PC-9 (cell line): ENCODE measurements at regions of chr1 and their contacts with region 1.

Region 1: GRCh38 chr1:245156081-245156735 is 1.4 kb downstream of the KIF26B start:
- DNase-seq: peak; percentile 67 to 95
- H3K4me3 ChIP-seq: peak overlapping the region; percentile 47; the same call in 1 of the 2 replicates
- H3K27ac ChIP-seq: no peak overlapping the region
- H3K4me1 ChIP-seq: peaks cover 23% of the 10 kb centered on the region
- H3K27me3 ChIP-seq: peaks cover 96% of the 10 kb centered on the region
- CTCF ChIP-seq: peak; percentile 75

Region 2: GRCh38 chr1:244864253-244865027 is 291.8 kb before region 1 on chr1 and contains the start of gene HNRNPU:
- CTCF ChIA-PET with region 1: no interaction called
- POLR2A ChIA-PET with region 1: no interaction called
- intact Hi-C with region 1: loop called (anchors 10 kb)
- DNase-seq: peak; percentile 84 to 97
- H3K4me3 ChIP-seq: peak within 1 kb of the TSS; percentile 98
- H3K27ac ChIP-seq: peak within 1 kb of the TSS; percentile 70
- H3K4me1 ChIP-seq: peaks cover 31% of the 10 kb centered on the region
- H3K27me3 ChIP-seq: no peaks in the 10 kb centered on the region
- CTCF ChIP-seq: peak; percentile 47; the same call in 1 of the 2 replicates
- total RNA-seq, gene HNRNPU: 291 and 376 TPM in 2 replicates

Region 3: DNA sequence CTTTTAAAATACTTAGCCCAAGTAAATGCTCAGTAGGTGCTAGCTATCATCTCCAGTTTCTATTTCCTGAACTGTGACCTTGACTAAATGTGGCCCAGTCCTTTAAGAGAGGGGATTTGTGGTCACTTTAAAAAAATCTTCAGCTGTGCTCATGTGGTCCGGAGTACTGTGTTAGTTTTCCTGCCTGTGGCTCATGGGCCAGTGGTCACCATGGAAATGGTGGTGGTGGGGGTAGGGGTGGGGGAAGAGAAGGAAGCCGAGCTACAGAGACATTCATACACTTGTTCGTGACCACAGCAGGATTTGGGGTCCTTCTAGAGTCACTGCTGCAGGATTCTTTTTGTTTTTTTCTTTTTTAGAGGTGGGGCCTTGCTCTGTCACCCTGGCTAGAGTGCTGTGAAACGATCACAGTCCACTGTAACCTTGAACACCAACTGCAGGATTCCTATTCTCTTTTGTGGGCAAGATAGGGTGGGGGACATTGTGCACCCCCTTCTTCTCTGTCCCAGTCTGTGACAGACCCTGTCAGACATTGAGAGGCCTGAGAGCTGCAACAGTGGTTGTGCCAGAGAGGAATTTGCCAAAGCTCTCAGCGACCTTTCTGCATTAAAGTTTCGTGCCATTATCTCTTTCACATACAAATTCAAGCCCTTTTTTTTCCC is 24.4 kb after region 1 on chr1:
- CTCF ChIA-PET with region 1: no interaction called
- POLR2A ChIA-PET with region 1: no interaction called
- intact Hi-C with region 1: no loop called
- DNase-seq: no peak
- H3K4me3 ChIP-seq: no peak overlapping the region
- H3K27ac ChIP-seq: no peak overlapping the region
- H3K4me1 ChIP-seq: peaks cover 8% of the 10 kb centered on the region; the same call in 1 of the 2 replicates
- H3K27me3 ChIP-seq: peaks cover 37% of the 10 kb centered on the region; the same call in 1 of the 2 replicates
- CTCF ChIP-seq: no peak

Region 4: GRCh38 chr1:246117066-246117791 is 961.0 kb after region 1 on chr1:
- CTCF ChIA-PET with region 1: no interaction called
- POLR2A ChIA-PET with region 1: no interaction called
- intact Hi-C with region 1: loop called (anchors 5 kb)
- DNase-seq: no peak
- H3K4me3 ChIP-seq: no peak overlapping the region
- H3K27ac ChIP-seq: no peak overlapping the region
- H3K4me1 ChIP-seq: no peaks in the 10 kb centered on the region
- H3K27me3 ChIP-seq: no peaks in the 10 kb centered on the region
- CTCF ChIP-seq: no peak; the same call in 1 of the 2 replicates

Region 5: GRCh38 chr1:246450611-246451251 is 1294.5 kb after region 1 on chr1:
- CTCF ChIA-PET with region 1: no interaction called
- POLR2A ChIA-PET with region 1: no interaction called
- intact Hi-C with region 1: loop called (anchors 1 kb)
- DNase-seq: no peak
- H3K4me3 ChIP-seq: no peak overlapping the region
- H3K27ac ChIP-seq: no peak overlapping the region
- H3K4me1 ChIP-seq: no peaks in the 10 kb centered on the region
- H3K27me3 ChIP-seq: no peaks in the 10 kb centered on the region
- CTCF ChIP-seq: peak; percentile 71

Region 6: GRCh38 chr1:246689409-246690008 is 1533.3 kb after region 1 on chr1:
- CTCF ChIA-PET with region 1: no interaction called
- POLR2A ChIA-PET with region 1: no interaction called
- intact Hi-C with region 1: loop called (anchors 5 kb)
- DNase-seq: peak; percentile 61
- H3K4me3 ChIP-seq: peak overlapping the region; percentile 54; the same call in 1 of the 2 replicates
- H3K27ac ChIP-seq: no peak overlapping the region
- H3K4me1 ChIP-seq: 0 out of 2 replicates have a peak, but pooled peaks cover 3% of the 10 kb centered on the region
- H3K27me3 ChIP-seq: no peaks in the 10 kb centered on the region
- CTCF ChIP-seq: peak; percentile 79